Esophagus muscularis mucosa (tissue), 4 donors: ENCODE measurements at regions of chr22 and their contacts with region 1.

Region 1: GRCh38 chr22:24133187-24133965 is 47.9 kb upstream of the SUSD2 start:
- DNase-seq: no peak
- H3K4me3 ChIP-seq: no peak overlapping the region
- H3K27ac ChIP-seq: no peak overlapping the region
- H3K4me1 ChIP-seq: peaks cover 13 to 38% (median 25%) of the 10 kb centered on the region in 4 donors
- H3K27me3 ChIP-seq: no peaks in the 10 kb centered on the region
- CTCF ChIP-seq: peak; percentile 64 to 81 (median 69)
- EP300 ChIP-seq: no peak
- POLR2A ChIP-seq: no peak

Region 2: DNA sequence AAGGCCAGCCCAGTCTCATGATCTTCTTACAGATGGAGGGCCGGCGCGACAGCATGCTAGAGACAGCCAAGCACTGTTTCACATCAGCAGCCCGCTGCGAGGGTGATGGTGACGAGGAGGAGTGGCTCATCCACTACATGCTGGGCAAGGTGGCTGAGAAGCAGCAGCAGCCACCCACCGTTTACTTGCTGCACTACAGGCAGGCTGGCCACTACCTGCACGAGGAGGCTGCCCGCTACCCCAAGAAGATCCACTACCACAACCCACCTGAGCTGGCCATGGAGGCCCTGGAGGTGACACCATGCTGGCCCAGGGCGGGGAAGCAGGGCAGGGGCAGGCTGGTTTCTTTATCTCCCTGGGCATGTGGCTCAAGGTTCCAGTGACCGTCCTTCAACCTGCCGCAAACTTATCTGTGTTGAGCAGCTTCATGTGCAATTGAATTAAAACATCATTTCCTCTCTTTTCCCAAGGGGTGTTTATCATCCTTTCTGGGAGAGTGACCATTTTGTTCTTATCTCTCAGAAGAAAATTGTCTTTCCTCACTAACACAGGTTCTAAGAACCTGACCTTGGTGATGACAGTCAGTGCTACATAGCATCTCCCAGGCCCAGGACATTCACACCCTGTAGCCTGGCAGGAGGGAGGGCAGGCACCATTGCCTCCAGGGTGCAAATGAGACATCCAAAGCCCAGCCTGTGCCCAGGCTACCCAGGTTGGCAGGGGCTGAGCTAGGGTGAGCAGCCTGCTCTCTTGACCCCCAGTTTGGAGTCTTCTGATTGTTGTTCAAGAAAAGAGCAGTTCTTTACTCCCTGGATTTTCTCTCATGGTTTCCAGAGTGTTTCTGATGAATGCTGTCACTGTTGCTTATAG is 41.6 kb before region 1 on chr22:
- intact Hi-C with region 1: no loop called
- DNase-seq: no peak
- H3K4me3 ChIP-seq: no peak overlapping the region
- H3K27ac ChIP-seq: no peak overlapping the region
- H3K4me1 ChIP-seq: peaks cover 0 to 12% (median 0%) of the 10 kb centered on the region in 4 donors
- H3K27me3 ChIP-seq: no peaks in the 10 kb centered on the region
- CTCF ChIP-seq: no peak
- EP300 ChIP-seq: no peak
- POLR2A ChIP-seq: no peak

Region 3: GRCh38 chr22:24175160-24175808 is 41.9 kb after region 1 on chr22:
- intact Hi-C with region 1: loop called (anchors 2 kb)
- DNase-seq: peak; percentile 94
- H3K4me3 ChIP-seq: no peak overlapping the region
- H3K27ac ChIP-seq: peak overlapping the region; percentile 83 to 88 (median 85)
- H3K4me1 ChIP-seq: peaks cover 32 to 64% (median 57%) of the 10 kb centered on the region in 4 donors
- H3K27me3 ChIP-seq: no peaks in the 10 kb centered on the region
- CTCF ChIP-seq: peak; percentile 88 to 92 (median 90)
- EP300 ChIP-seq: no peak
- POLR2A ChIP-seq: no peak